KBM-7 (cell line): ENCODE measurements at regions of chr19 and their contacts with region 1.

Region 1: GRCh38 chr19:3852614-3853254 is 16.1 kb downstream of the ZFR2 start:
- DNase-seq: peak; percentile 76

Region 2: GRCh38 chr19:3743486-3743885 is 109.2 kb before region 1 on chr19:
- in situ Hi-C with region 1: no loop called
- DNase-seq: peak; percentile 47

Region 3: DNA sequence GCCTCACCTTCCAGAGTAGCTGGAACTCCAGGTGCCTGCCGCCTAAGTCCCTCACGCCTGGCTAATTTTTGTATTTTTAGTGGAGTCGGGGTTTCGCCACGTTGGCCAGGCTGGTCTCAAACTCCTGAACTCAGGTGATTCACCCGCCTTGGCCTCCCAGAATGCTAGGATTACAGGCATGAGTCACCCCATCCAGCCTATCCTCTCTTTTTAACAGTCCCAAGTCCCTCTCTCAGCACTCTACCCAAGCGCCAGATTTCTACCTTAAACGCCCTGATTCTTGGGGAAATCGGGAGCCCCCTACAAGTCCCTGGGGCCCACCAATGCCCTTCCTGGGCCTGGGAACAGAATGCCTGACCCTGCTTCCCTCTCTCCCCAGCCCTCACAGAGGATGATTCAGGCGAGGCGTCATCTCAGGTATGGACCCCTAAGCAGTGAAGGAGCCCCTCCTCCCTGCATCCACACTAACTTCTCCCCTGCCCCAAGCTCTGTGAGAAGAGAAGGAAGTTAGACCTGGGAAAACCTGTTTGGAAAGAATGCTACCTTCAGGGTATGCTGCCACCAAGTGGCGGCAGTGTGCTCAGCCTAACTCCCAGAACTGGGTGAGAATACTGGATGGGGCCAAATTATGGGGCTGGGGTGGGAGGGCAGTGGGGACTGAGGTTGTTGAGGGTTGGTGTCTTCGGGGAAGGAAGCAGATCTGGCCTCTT is 355.8 kb after region 1 on chr19:
- in situ Hi-C with region 1: loop called (anchors 25 kb)
- DNase-seq: no peak